Cardiac septum (tissue), 1 donor: ENCODE measurements at regions of chr3 and their contacts with region 1.

Region 1: GRCh38 chr3:99817437-99818240 is at the start of gene CMSS1:
- DNase-seq: peak; percentile 98
- total RNA-seq, gene CMSS1: 22.0 TPM

Region 2: DNA sequence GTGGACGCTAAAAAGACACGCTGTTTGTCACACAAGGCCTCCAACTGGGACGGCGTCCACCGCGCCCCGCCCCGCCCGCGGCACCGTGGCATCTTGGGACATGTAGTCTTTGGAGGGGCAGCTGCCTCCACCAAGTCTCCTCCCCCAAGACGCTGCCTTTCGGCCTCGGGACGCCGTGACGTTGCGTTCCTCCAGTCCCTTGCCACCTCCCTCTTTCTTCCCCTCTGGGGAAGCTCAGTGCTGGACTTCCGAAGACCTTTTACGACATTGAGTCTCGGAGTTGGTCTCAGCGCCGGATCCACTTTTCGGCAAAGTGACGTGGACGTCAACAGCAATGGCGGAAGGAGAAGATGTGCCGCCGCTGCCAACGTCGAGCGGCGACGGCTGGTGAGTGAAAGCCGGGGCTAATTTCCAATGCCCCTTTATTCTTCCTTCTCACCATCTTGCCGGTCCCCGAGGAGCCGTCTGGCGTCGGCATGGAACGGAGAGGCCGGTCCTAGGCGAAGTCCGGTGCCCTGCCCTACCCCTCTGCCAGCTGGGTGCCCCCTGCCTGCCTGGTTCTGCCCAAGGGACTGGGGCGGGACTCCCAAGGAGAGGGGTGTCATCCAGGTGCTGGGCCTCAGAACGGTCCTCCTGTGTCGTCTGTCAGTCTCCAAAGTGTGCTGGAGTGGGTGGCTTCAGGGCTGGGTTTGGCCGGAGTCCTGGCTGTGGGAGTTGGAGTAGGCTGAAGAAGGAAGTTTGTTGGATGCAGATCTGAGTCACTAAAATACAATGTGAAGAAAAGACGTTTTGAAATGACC is 443.2 kb after region 1 on chr3 and contains the start of gene TBC1D23:
- intact Hi-C with region 1: loop called (anchors 5 kb)
- DNase-seq: peak; percentile 100
- total RNA-seq, gene TBC1D23: 35.1 TPM